ENCODE measurements at regions of chr11 and their contacts with region 1.

Region 1: GRCh38 chr11:10307442-10308207 is 2.8 kb downstream of the ADM start:
- DNase-seq: peak; percentile 73 to 88 (median 83)
- ATAC-seq: peak; percentile 83
- H3K4me3 ChIP-seq: peak overlapping the region; percentile 99
- H3K4me3 Mint-ChIP-seq: peak overlapping the region; percentile 64 to 100 (median 95)
- H3K27ac ChIP-seq: no peak overlapping the region
- H3K27ac Mint-ChIP-seq: peak overlapping the region in 6 of 9 donors; percentile 15 to 85 (median 46)
- H3K4me1 ChIP-seq: peaks cover 15 to 37% of the 10 kb centered on the region in 2 donors
- H3K4me1 Mint-ChIP-seq: peaks cover 25 to 57% (median 38%) of the 10 kb centered on the region in 7 donors
- H3K27me3 ChIP-seq: peaks cover 3 to 14% of the 10 kb centered on the region in 2 donors
- H3K27me3 Mint-ChIP-seq: peaks cover 31 to 54% (median 44%) of the 10 kb centered on the region in 5 donors

Region 2: DNA sequence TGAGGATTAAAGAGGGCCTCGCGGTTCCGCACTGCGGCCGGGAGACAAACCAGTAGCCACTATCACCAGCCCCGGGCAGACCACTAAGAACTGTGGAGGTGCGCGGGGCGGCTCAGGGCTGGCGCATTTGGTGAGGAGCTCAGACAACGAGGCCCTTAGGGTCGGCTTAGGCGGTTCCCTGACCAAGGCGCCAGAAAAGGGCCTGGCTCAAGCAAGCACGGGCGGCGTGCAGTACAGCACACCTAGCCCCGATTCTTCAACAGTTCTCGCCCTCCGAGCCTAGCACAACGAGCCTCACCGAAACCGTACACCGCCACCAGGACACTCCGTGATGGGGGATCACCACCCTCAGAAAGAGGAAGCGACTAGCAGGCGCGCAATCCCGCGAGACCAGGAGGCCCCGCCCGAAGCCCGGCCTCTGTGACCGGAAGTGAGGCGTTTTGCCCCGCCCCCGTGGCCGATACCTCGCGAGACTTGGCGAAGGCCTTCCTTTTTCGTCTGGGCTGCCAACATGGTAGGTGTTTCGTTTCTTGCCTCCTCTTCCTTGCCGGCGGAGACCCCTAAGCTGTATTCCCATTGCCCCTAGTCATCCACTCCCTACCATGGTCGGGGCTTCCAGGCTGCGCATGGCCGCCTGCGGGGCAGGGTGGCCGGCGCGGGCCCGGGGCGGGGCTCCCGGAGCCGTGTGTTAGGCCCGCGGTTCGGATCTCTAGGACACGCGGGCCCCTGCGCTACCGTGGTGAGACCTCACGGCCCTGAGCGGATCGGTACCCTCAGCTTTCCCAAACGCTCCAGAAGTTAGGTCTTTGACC is 1625.1 kb before region 1 on chr11 and contains the starts of genes RPL27A and TRIM66:
- CTCF ChIA-PET with region 1: no interaction called
- POLR2A ChIA-PET with region 1: no interaction called
- intact Hi-C with region 1: loop called (anchors 5 to 10 kb)
- DNase-seq: peak; percentile 97 to 100 (median 99)
- ATAC-seq: peak; percentile 98
- H3K4me3 ChIP-seq: peak within 1 kb of the TSS; percentile 73
- H3K4me3 Mint-ChIP-seq: peak within 1 kb of the TSS; percentile 89 to 97 (median 96)
- H3K27ac ChIP-seq: peak within 1 kb of the TSS; percentile 99
- H3K27ac Mint-ChIP-seq: peak within 1 kb of the TSS; percentile 97 to 99 (median 98)
- H3K4me1 ChIP-seq: peaks cover 17% of the 10 kb centered on the region in 2 donors
- H3K4me1 Mint-ChIP-seq: peaks cover 30 to 57% (median 43%) of the 10 kb centered on the region in 7 donors
- H3K27me3 ChIP-seq: no peaks in the 10 kb centered on the region
- H3K27me3 Mint-ChIP-seq: no peaks in the 10 kb centered on the region
- total RNA-seq, gene RPL27A: 758 to 2,116 (median 1,670) TPM
- total RNA-seq, gene TRIM66: 16.0 to 37.6 (median 24.2) TPM

Region 3: GRCh38 chr11:9534791-9535781 is 772.5 kb before region 1 on chr11:
- CTCF ChIA-PET with region 1: interaction called, 6 read pairs
- POLR2A ChIA-PET with region 1: no interaction called
- intact Hi-C with region 1: loop called in 1 of 2 experiments (anchors 5 kb)
- DNase-seq: peak; percentile 34 to 83 (median 62)
- ATAC-seq: peak; percentile 84
- H3K4me3 ChIP-seq: no peak overlapping the region
- H3K4me3 Mint-ChIP-seq: no peak overlapping the region
- H3K27ac ChIP-seq: no peak overlapping the region
- H3K27ac Mint-ChIP-seq: no peak overlapping the region
- H3K4me1 ChIP-seq: no peaks in the 10 kb centered on the region
- H3K4me1 Mint-ChIP-seq: no peaks in the 10 kb centered on the region
- H3K27me3 ChIP-seq: no peaks in the 10 kb centered on the region
- H3K27me3 Mint-ChIP-seq: no peaks in the 10 kb centered on the region

Region 4: DNA sequence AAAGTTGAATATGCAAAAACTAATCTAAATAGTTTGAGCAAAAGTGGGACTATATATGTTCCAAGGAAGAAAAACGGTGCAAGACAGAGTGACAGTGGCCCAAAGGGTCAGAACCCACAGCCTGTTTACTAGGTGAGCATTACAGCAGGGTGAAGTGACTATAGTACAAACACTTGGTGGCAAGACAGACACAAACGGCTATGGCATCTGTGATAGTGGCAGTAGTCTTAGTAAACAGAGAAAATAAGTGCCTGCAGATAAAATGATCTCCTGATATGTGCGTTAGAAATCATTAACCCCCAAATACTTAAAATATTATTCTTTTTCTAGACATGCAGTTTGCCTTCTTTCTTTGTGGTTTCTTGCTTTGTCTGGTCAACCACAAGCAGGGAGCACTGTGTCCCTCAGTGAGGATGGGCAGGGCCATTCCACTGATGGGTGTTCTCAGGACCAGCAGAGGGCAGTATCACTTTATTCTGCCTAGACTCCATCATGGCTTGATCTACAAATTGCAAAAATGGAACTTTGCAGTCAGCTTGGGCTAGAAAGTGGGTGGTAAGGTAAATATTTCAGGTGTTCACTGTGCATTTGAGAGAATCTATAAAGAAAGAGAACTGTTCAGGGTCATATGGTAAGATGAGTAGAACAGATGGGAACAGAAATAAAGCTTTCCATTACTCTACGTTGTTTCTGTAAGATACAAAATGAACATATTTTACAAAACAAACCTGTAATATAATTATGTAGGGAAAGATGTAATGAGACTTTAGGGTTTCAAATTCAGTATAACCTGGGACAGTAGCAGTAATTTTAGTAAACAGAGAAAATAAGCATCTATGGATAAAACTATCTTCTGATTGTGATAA is 445.5 kb before region 1 on chr11:
- CTCF ChIA-PET with region 1: interaction called, 6 read pairs
- POLR2A ChIA-PET with region 1: no interaction called
- intact Hi-C with region 1: loop called (anchors 1 to 2 kb)
- DNase-seq: peak in 7 of 9 donors; percentile 5 to 37 (median 31)
- ATAC-seq: peak; percentile 85
- H3K4me3 ChIP-seq: no peak overlapping the region
- H3K4me3 Mint-ChIP-seq: no peak overlapping the region
- H3K27ac ChIP-seq: no peak overlapping the region
- H3K27ac Mint-ChIP-seq: no peak overlapping the region
- H3K4me1 ChIP-seq: peaks cover 0 to 9% of the 10 kb centered on the region in 2 donors
- H3K4me1 Mint-ChIP-seq: peaks cover 9 to 41% (median 27%) of the 10 kb centered on the region in 7 donors
- H3K27me3 ChIP-seq: no peaks in the 10 kb centered on the region
- H3K27me3 Mint-ChIP-seq: no peaks in the 10 kb centered on the region

Region 5: DNA sequence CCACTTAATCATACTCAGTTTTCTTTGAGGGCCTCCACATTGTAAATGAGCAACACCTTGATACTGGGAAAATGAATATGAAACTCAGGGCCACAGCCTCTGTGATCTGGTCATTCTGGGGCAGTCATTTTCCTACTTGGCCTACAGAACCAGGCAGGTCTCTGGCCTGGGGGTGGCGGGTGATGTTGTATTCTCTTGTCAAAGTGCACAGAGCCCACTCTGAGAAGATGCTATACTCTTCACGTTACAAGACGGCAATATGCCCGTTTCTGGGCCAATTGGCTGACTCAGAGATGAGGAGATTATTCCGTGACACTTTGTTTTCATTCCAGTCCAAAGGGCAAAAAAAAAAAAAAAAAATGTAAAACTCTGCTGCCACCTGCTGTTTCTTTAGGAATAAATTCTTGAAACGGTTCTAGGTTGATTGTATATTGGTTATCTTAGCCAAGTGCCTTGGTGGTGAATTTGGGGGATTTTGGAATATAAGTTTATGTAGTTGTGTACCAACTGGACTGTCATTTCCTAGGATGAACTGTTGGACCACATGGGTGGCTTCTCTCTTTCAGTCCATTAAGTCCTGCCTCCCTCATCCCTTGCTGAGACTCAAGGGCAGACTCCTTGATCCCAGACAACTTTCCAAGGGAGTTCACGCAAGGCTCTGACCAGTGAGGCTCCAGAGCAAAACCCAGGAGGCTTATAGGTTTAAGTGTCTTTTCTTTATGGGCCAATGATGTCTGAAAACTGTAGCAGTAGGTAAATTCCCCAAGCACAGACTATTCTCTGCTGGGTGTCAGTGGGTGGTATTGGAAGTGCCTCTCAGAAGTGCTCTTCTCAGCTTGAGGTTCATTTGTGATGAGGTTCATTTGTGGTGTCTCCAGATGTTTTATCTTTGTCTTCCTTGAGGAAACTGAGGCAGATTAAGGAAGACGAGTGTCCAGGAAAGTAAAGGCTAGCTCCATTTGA is 15.5 kb after region 1 on chr11:
- CTCF ChIA-PET with region 1: interaction called, 4 read pairs
- POLR2A ChIA-PET with region 1: no interaction called
- intact Hi-C with region 1: loop called (anchors 1 kb)
- DNase-seq: peak in 8 of 9 donors; percentile 10 to 70 (median 48)
- ATAC-seq: peak; percentile 70
- H3K4me3 ChIP-seq: no peak overlapping the region
- H3K4me3 Mint-ChIP-seq: peak overlapping the region in 1 of 10 donors; percentile 26
- H3K27ac ChIP-seq: no peak overlapping the region
- H3K27ac Mint-ChIP-seq: peak overlapping the region in 5 of 9 donors; percentile 16 to 82 (median 55)
- H3K4me1 ChIP-seq: no peaks in the 10 kb centered on the region
- H3K4me1 Mint-ChIP-seq: peaks cover 0 to 11% (median 3%) of the 10 kb centered on the region in 7 donors
- H3K27me3 ChIP-seq: no peaks in the 10 kb centered on the region
- H3K27me3 Mint-ChIP-seq: peaks cover 4 to 20% (median 8%) of the 10 kb centered on the region in 5 donors

Region 6: DNA sequence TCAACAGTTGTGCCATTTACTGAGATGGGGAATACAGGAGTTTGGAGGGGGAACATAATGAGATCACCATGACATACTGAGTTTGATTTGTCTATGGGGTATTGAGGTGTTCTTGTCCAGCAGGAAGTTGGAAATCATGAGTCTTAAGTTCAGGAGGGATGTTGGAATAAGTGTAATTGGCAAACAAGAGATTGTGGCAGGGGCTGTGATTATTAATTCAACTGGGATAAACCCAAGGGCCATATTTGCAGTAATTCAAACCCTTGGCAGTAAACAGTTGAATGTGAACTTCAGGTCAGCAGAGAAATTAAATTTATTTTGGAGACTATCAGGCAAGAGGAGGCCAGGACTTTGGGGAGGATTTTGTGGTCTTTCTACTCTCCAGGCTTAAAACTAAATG is 30.7 kb after region 1 on chr11:
- CTCF ChIA-PET with region 1: no interaction called
- POLR2A ChIA-PET with region 1: no interaction called
- intact Hi-C with region 1: no loop called
- DNase-seq: no peak
- ATAC-seq: no peak
- H3K4me3 ChIP-seq: no peak overlapping the region
- H3K4me3 Mint-ChIP-seq: no peak overlapping the region
- H3K27ac ChIP-seq: no peak overlapping the region
- H3K27ac Mint-ChIP-seq: no peak overlapping the region
- H3K4me1 ChIP-seq: no peaks in the 10 kb centered on the region
- H3K4me1 Mint-ChIP-seq: no peaks in the 10 kb centered on the region
- H3K27me3 ChIP-seq: no peaks in the 10 kb centered on the region
- H3K27me3 Mint-ChIP-seq: peaks cover 10 to 27% (median 23%) of the 10 kb centered on the region in 5 donors

Region 7: DNA sequence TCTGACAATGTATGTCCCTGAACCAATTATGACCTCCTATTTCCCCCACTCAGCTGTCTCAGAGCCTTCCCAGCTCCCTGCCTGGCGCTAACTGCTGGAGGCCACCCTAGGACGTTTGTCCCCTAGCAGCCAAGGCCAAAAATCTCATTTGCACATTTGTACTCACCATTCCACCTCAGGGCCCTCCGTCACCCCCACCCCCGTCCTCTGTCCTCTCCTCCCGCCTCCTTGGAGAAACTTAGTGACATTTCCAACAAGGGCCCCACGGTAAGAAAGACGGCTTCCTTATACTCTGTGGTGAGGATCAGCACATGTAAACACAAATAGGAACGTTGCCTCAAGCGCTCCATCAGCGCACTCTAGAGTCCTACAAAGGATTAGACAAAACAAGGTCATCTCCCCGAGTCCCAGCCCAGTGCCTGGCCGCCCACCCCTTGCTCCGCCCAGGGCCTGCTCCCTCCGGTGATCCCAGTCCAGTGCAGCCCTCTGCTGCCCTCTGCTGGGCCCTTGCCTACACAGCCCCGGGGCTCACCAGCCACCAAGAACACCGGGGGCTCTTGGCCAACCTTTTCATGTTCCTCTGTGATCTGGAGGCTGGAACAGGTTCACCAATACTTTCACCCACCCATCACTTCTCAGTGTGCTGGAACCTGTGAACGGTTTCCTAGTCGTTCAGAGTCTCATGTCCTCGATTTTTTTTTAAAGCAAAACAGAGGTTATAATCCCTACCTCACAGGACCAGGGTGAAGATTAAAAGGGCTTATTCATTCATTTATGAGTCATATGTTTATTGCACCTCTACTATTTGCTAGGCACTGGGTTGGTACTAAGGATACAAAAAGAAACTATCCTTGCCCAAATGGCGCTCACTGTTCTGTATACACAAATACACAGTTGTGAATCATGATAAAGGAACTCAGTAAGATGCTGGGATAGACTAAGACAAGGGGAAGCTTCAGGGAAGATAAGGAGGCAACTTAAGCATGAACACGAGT is 428.2 kb after region 1 on chr11:
- CTCF ChIA-PET with region 1: no interaction called
- POLR2A ChIA-PET with region 1: no interaction called
- intact Hi-C with region 1: loop called (anchors 1 to 5 kb)
- DNase-seq: peak; percentile 62 to 92 (median 77)
- ATAC-seq: peak; percentile 100
- H3K4me3 ChIP-seq: no peak overlapping the region
- H3K4me3 Mint-ChIP-seq: peak overlapping the region in 8 of 10 donors; percentile 8 to 75 (median 62)
- H3K27ac ChIP-seq: no peak overlapping the region
- H3K27ac Mint-ChIP-seq: peak overlapping the region in 5 of 9 donors; percentile 31 to 71 (median 59)
- H3K4me1 ChIP-seq: peaks cover 0 to 4% of the 10 kb centered on the region in 2 donors
- H3K4me1 Mint-ChIP-seq: peaks cover 5 to 13% (median 8%) of the 10 kb centered on the region in 7 donors
- H3K27me3 ChIP-seq: no peaks in the 10 kb centered on the region
- H3K27me3 Mint-ChIP-seq: peaks cover 4 to 19% (median 12%) of the 10 kb centered on the region in 5 donors

Region 8: DNA sequence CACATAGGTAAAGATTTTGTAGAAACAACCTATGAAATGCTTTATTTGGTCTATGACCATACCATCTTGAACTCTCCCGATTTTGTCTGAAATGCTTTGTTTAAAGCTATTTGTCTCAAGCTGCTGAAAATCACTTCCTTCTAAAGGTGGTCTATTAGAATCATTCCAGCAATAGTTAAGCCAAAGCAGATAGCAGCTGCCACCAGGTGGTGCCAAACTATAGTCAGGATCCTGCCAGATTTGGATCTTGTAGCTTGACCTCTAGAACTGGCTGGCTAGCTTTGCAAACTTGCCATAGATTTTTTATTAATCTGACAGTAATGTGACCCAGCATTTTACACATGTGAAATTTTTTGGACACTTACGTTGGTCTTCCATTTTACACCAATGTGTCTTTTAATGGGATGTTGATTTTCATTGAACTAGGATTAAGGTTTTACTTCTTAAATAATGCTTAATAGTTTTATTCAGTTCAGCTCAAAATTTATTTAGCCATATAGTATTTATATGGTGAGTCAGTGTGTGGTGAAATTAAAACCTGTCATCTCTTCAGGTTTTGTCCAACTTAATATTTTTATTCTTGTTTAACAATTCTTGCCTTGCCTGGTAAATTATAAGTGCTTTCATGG is 463.1 kb after region 1 on chr11:
- CTCF ChIA-PET with region 1: no interaction called
- POLR2A ChIA-PET with region 1: no interaction called
- intact Hi-C with region 1: no loop called
- DNase-seq: no peak
- ATAC-seq: no peak
- H3K4me3 ChIP-seq: no peak overlapping the region
- H3K4me3 Mint-ChIP-seq: no peak overlapping the region
- H3K27ac ChIP-seq: no peak overlapping the region
- H3K27ac Mint-ChIP-seq: peak overlapping the region in 1 of 9 donors; percentile 48
- H3K4me1 ChIP-seq: no peaks in the 10 kb centered on the region
- H3K4me1 Mint-ChIP-seq: peaks cover 0 to 4% (median 0%) of the 10 kb centered on the region in 7 donors
- H3K27me3 ChIP-seq: no peaks in the 10 kb centered on the region
- H3K27me3 Mint-ChIP-seq: no peaks in the 10 kb centered on the region

Measured in naive thymus-derived CD4-positive, alpha-beta T cell (primary cell).